Natural killer cell (primary cell): ENCODE measurements at regions of chr3 and their contacts with region 1.

Region 1: GRCh38 chr3:149120051-149120972 is 9.1 kb upstream of the HPS3 start:
- DNase-seq: peak in 1 of 2 donors; percentile 83
- ATAC-seq: peak; percentile 75 to 94 (median 87)
- H3K4me3 ChIP-seq: no peak overlapping the region
- H3K4me3 Mint-ChIP-seq: no peak overlapping the region
- H3K27ac ChIP-seq: no peak overlapping the region
- H3K27ac Mint-ChIP-seq: no peak overlapping the region
- H3K4me1 ChIP-seq: no peaks in the 10 kb centered on the region
- H3K4me1 Mint-ChIP-seq: peaks cover 6 to 7% of the 10 kb centered on the region in 2 donors
- H3K27me3 ChIP-seq: no peaks in the 10 kb centered on the region
- H3K27me3 Mint-ChIP-seq: peaks cover 0 to 7% of the 10 kb centered on the region in 2 donors
- CTCF ChIP-seq: peak; percentile 77

Region 2: DNA sequence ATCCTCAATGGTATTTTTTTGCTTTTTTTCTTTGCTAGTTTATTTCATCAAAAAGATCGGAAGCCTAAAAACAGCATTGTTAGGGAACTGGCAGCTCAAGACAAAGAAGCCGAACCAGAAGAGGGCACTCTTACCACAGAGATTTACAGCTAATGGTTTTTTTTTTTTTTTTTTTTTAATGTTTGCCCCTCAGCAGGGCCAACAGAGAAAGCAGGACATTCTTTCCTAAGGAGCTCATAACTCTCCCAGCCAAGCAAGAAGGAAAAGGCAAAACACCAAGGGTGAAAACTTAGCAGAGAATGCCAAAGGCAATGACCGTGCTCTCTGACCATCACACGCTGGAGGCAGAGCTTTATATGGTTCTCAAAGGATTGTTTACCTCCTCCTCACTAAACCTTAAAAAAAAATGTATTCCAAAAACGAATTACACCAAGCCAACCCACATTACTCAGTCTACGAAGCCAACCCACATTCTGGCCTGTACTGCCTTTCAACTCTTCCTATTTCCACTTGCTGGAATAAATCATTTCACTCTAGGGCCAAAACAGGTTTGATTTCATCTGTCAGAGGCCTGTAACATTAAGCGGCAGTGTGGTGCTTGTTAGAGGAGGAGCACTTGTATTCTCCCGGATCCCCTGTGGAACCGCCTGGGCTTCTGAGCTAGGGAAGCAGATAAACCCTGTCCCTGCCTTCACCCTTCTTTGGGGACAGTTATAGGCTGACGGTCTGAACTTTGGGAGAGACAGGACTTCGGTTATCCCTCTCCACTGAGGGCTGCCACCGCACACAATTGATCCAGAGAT is 164.6 kb before region 1 on chr3:
- intact Hi-C with region 1: loop called (anchors 2 kb)
- DNase-seq: peak in 1 of 2 donors; percentile 67
- ATAC-seq: peak in 2 of 3 donors; percentile 64 to 65
- H3K4me3 ChIP-seq: no peak overlapping the region
- H3K4me3 Mint-ChIP-seq: no peak overlapping the region
- H3K27ac ChIP-seq: no peak overlapping the region
- H3K27ac Mint-ChIP-seq: no peak overlapping the region
- H3K4me1 ChIP-seq: no peaks in the 10 kb centered on the region
- H3K4me1 Mint-ChIP-seq: peaks cover 6% of the 10 kb centered on the region in 2 donors
- H3K27me3 ChIP-seq: no peaks in the 10 kb centered on the region
- H3K27me3 Mint-ChIP-seq: no peaks in the 10 kb centered on the region
- CTCF ChIP-seq: peak; percentile 62

Region 3: GRCh38 chr3:149044339-149045083 is 75.8 kb before region 1 on chr3:
- intact Hi-C with region 1: no loop called
- DNase-seq: no peak
- ATAC-seq: no peak
- H3K4me3 ChIP-seq: no peak overlapping the region
- H3K4me3 Mint-ChIP-seq: no peak overlapping the region
- H3K27ac ChIP-seq: no peak overlapping the region
- H3K27ac Mint-ChIP-seq: peak overlapping the region in 1 of 2 donors; percentile 33
- H3K4me1 ChIP-seq: no peaks in the 10 kb centered on the region
- H3K4me1 Mint-ChIP-seq: peaks cover 19 to 24% of the 10 kb centered on the region in 2 donors
- H3K27me3 ChIP-seq: no peaks in the 10 kb centered on the region
- H3K27me3 Mint-ChIP-seq: no peaks in the 10 kb centered on the region
- CTCF ChIP-seq: no peak

Region 4: GRCh38 chr3:149234671-149235245 is 114.4 kb after region 1 on chr3:
- intact Hi-C with region 1: no loop called
- DNase-seq: no peak
- ATAC-seq: no peak
- H3K4me3 ChIP-seq: no peak overlapping the region
- H3K4me3 Mint-ChIP-seq: no peak overlapping the region
- H3K27ac ChIP-seq: no peak overlapping the region
- H3K27ac Mint-ChIP-seq: no peak overlapping the region
- H3K4me1 ChIP-seq: no peaks in the 10 kb centered on the region
- H3K4me1 Mint-ChIP-seq: no peaks in the 10 kb centered on the region
- H3K27me3 ChIP-seq: no peaks in the 10 kb centered on the region
- H3K27me3 Mint-ChIP-seq: peaks cover 0 to 2% of the 10 kb centered on the region in 2 donors
- CTCF ChIP-seq: no peak

Region 5: DNA sequence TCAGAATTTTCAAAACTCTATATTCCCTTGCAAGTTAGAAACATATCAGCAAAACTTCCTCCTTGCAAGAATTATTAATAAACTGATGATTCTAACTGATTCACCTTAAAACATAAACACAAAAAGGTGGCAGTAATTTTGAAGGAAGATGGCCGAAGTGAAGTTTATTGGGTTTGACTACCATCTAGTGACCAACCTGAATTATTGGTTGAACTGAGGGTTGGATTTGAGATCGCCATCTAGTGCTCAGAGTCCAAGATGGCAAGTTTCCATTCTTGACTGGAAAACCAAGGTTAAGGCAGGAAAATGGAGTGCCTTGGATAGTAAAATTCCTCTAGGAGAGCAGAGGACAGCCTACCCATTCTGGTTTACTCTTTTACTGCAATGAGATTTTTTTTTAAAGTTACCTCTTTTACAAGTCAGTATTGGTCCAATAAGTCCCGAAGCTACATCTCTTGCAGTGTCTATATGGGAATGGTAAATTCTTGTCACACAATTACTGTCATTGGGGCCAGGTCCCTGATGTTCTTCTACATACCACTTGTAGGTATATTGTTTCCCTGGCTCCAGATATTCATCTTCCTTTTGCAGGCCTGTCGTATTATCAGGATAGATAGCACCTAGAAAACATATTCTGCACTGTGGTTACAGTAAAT is 152.9 kb after region 1 on chr3:
- intact Hi-C with region 1: loop called (anchors 1 kb)
- DNase-seq: peak in 1 of 2 donors; percentile 84
- ATAC-seq: peak; percentile 77 to 86 (median 81)
- H3K4me3 ChIP-seq: no peak overlapping the region
- H3K4me3 Mint-ChIP-seq: no peak overlapping the region
- H3K27ac ChIP-seq: no peak overlapping the region
- H3K27ac Mint-ChIP-seq: no peak overlapping the region
- H3K4me1 ChIP-seq: peaks cover 6% of the 10 kb centered on the region
- H3K4me1 Mint-ChIP-seq: peaks cover 14 to 22% of the 10 kb centered on the region in 2 donors
- H3K27me3 ChIP-seq: no peaks in the 10 kb centered on the region
- H3K27me3 Mint-ChIP-seq: peaks cover 0 to 3% of the 10 kb centered on the region in 2 donors
- CTCF ChIP-seq: peak; percentile 98

Region 6: DNA sequence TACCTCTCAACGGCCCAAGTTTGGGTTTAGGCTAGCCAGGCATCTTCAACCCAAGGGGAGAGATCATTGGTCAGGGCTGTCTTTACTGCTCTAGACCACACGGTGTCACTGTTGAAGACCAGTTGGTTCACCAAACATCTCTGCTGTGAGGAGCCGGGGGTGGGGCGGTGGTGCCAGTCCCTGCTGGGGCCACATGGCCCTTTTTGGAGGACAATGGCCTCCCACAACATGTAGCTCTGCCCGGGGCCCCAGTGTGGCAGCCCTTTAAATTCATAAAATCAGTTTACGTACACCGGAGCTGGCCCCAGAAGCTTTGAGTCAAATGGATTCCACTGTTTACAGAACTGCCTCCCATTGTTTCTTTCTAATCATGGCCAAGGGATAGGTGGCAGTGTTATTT is 232.2 kb after region 1 on chr3:
- intact Hi-C with region 1: loop called (anchors 1 kb)
- DNase-seq: peak in 1 of 2 donors; percentile 29
- ATAC-seq: peak; percentile 70 to 92 (median 75)
- H3K4me3 ChIP-seq: no peak overlapping the region
- H3K4me3 Mint-ChIP-seq: no peak overlapping the region
- H3K27ac ChIP-seq: no peak overlapping the region
- H3K27ac Mint-ChIP-seq: no peak overlapping the region
- H3K4me1 ChIP-seq: no peaks in the 10 kb centered on the region
- H3K4me1 Mint-ChIP-seq: no peaks in the 10 kb centered on the region
- H3K27me3 ChIP-seq: no peaks in the 10 kb centered on the region
- H3K27me3 Mint-ChIP-seq: peaks cover 10 to 12% of the 10 kb centered on the region in 2 donors
- CTCF ChIP-seq: peak; percentile 63

Region 7: DNA sequence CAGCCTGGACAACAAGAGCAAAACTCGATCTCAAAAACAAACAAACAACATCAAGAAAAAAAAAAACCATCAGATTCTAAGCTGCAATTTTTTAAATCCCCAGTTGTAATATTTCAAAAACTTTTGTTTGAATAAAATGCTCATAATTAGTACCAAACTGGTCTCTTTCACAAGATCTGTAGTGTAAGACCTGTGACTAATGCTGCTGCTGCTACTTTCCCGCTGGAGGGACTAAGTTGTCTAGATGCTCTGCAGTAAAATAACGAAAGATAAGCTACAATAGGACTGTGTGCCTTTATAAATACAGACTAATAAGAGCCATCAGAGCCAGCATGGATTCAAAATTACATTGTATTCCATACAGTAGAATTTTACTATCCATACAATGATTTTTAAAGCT is 399.6 kb after region 1 on chr3:
- intact Hi-C with region 1: no loop called
- DNase-seq: no peak
- ATAC-seq: no peak
- H3K4me3 ChIP-seq: no peak overlapping the region
- H3K4me3 Mint-ChIP-seq: no peak overlapping the region
- H3K27ac ChIP-seq: no peak overlapping the region
- H3K27ac Mint-ChIP-seq: no peak overlapping the region
- H3K4me1 ChIP-seq: no peaks in the 10 kb centered on the region
- H3K4me1 Mint-ChIP-seq: no peaks in the 10 kb centered on the region
- H3K27me3 ChIP-seq: peaks cover 3% of the 10 kb centered on the region
- H3K27me3 Mint-ChIP-seq: peaks cover 8 to 10% of the 10 kb centered on the region in 2 donors
- CTCF ChIP-seq: no peak

Region 8: DNA sequence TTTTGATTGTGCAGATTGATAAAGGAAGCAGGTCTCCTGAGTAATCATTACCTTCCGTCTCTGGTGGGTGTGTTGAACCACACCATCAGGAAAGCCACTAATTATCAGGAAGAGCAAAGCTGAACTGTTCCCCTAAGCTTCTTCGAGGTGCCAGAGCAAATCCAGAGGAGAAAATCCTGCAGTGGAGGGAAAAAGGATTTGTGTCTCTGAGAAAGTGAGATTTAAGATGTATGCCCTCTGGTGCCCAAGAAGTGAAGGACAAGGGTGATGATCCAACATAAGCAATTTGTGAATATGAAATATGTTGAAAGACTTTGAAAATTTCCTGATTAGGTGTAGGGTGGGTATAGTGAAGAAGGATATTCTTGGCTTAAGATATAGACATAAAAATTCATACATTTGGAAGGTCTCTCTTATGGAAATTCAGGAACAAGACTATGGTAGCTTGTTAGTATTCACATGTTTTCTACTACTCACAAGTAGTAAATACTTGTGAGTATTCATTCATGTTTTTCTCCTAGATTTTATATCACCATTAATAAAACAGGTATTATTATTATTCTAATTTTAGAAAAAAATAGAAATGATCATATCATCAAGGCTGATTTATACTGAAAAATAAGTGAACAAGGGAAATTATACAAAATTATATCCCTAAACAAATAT is 597.2 kb after region 1 on chr3:
- intact Hi-C with region 1: no loop called
- DNase-seq: peak in 1 of 2 donors; percentile 52
- ATAC-seq: no peak
- H3K4me3 ChIP-seq: no peak overlapping the region
- H3K4me3 Mint-ChIP-seq: no peak overlapping the region
- H3K27ac ChIP-seq: no peak overlapping the region
- H3K27ac Mint-ChIP-seq: no peak overlapping the region
- H3K4me1 ChIP-seq: no peaks in the 10 kb centered on the region
- H3K4me1 Mint-ChIP-seq: no peaks in the 10 kb centered on the region
- H3K27me3 ChIP-seq: no peaks in the 10 kb centered on the region
- H3K27me3 Mint-ChIP-seq: peaks cover 4 to 18% of the 10 kb centered on the region in 2 donors
- CTCF ChIP-seq: peak; percentile 65